ENCODE measurements at regions of chr15 and their contacts with region 1.

Region 1: GRCh38 chr15:41331833-41332787 is at the start of gene OIP5:
- DNase-seq: peak; percentile 90 to 98 (median 96)
- H3K4me3 ChIP-seq: peak within 1 kb of the TSS; percentile 65 to 100 (median 89)
- H3K27ac ChIP-seq: peak within 1 kb of the TSS in 33 of 59 donors; percentile 3 to 75 (median 33)
- H3K27me3 ChIP-seq: no peaks in the 10 kb centered on the region
- CTCF ChIP-seq: peak in 55 of 56 donors; percentile 21 to 75 (median 54)
- total RNA-seq, gene OIP5: 0.32 to 2.6 (median 0.63) TPM in 63 of 120 experiments, not detected in the others

Region 2: GRCh38 chr15:41291065-41291631 is 41.0 kb before region 1 on chr15:
- intact Hi-C with region 1: loop called in 1 of 2 experiments (anchors 5 kb)
- DNase-seq: no peak
- H3K4me3 ChIP-seq: no peak overlapping the region
- H3K27ac ChIP-seq: peak overlapping the region in 2 of 59 donors; percentile 3 to 7
- H3K27me3 ChIP-seq: no peaks in the 10 kb centered on the region
- CTCF ChIP-seq: no peak